PC-9 (cell line): ENCODE measurements at regions of chr6 and their contacts with region 1.

Region 1: GRCh38 chr6:116210750-116211425 is 43.0 kb downstream of the TSPYL4 start:
- DNase-seq: peak; percentile 70 to 73
- H3K4me3 ChIP-seq: no peak overlapping the region
- H3K27ac ChIP-seq: peak overlapping the region; percentile 53
- H3K4me1 ChIP-seq: peaks cover 20% of the 10 kb centered on the region
- H3K27me3 ChIP-seq: no peaks in the 10 kb centered on the region
- CTCF ChIP-seq: no peak

Region 2: DNA sequence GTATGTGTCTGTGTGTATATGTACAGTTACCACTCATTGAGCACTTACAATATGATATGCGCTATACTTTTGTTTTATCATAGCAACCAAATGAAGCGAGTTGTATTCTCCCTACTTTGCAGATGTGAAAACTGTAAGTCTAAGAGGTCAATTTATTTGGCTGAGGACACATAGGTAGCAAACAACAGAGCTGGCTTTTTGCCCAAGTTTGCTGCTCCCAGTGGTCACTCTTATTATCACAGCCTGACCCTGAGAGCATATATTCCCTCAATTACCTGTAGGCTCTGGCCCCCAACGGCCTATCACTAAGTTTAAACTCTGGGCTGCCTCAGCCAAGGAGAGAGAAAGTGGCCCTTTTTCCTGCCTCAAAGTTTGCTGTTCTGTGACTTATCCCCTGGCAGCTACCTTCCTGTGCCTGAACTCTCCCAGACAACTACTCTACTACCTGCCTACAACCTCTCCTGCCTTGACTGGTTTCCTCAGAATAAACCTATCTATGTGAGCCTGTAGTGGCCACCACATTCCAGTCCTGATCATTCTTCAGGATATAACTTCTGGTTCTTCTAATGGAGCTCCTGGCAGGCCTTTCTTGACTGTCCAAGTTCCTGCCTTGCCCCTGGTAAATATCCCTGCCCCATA is 372.0 kb before region 1 on chr6:
- CTCF ChIA-PET with region 1: no interaction called
- POLR2A ChIA-PET with region 1: no interaction called
- intact Hi-C with region 1: no loop called
- DNase-seq: peak; percentile 32 to 44
- H3K4me3 ChIP-seq: no peak overlapping the region
- H3K27ac ChIP-seq: no peak overlapping the region
- H3K4me1 ChIP-seq: no peaks in the 10 kb centered on the region
- H3K27me3 ChIP-seq: no peaks in the 10 kb centered on the region
- CTCF ChIP-seq: peak; percentile 81

Region 3: GRCh38 chr6:116159782-116160524 is 50.9 kb before region 1 on chr6:
- CTCF ChIA-PET with region 1: interaction called, 12 read pairs
- POLR2A ChIA-PET with region 1: no interaction called
- intact Hi-C with region 1: no loop called
- DNase-seq: no peak
- H3K4me3 ChIP-seq: no peak overlapping the region
- H3K27ac ChIP-seq: no peak overlapping the region
- H3K4me1 ChIP-seq: no peaks in the 10 kb centered on the region
- H3K27me3 ChIP-seq: no peaks in the 10 kb centered on the region
- CTCF ChIP-seq: no peak